ENCODE measurements at regions of chr12 and their contacts with region 1.

Region 1: GRCh38 chr12:57583008-57583831 is 7.8 kb upstream of the PIP4K2C start:
- DNase-seq: peak; percentile 90 to 96
- ATAC-seq: peak; percentile 91 to 98
- H3K4me3 ChIP-seq: no peak overlapping the region
- H3K27ac ChIP-seq: no peak overlapping the region
- H3K4me1 ChIP-seq: peaks cover 13% of the 10 kb centered on the region
- CTCF ChIP-seq: peak; percentile 96
- EP300 ChIP-seq: no peak
- POLR2A ChIP-seq: no peak
- RAD21 ChIP-seq: peak; percentile 86 to 93

Region 2: DNA sequence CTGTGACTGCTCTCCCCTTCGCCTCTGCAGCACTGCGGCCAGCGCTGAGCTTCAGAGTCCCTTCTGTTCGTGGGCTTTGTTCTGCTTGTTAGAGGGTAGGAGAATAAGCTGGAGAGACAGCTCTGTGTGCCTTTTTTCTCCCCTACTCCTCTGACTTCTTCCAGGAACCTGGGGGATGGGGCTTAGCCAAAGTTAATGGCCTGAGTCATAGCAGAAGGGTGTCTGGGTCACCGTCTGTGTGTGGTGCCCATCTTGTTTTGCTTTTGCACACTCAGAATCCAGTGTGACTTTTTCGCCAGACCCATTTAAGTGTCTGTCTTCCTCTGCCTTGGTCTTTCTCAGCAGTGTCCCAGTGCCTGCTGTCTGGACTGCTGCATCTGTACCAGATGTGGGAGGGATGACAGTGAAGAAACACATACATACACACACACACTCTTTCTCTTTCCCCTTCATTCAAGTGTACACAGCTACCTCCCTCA is 30.3 kb before region 1 on chr12:
- CTCF ChIA-PET with region 1: interaction called, 18 read pairs
- POLR2A ChIA-PET with region 1: no interaction called
- DNase-seq: no peak
- ATAC-seq: peak; percentile 30 to 33; a peak in 4 of 6 replicates
- H3K4me3 ChIP-seq: no peak overlapping the region
- H3K27ac ChIP-seq: peak overlapping the region in 1 of 2 experiments; percentile 7; a peak in 1 of 6 replicates
- H3K4me1 ChIP-seq: peaks cover 15% of the 10 kb centered on the region; the same call in 2 of the 3 replicates
- CTCF ChIP-seq: no peak
- EP300 ChIP-seq: no peak
- POLR2A ChIP-seq: no peak
- RAD21 ChIP-seq: no peak

Region 3: GRCh38 chr12:57621497-57622292 is 38.5 kb after region 1 on chr12:
- CTCF ChIA-PET with region 1: interaction called, 336 read pairs
- POLR2A ChIA-PET with region 1: no interaction called
- DNase-seq: peak; percentile 64 to 88
- ATAC-seq: peak; percentile 76 to 92
- H3K4me3 ChIP-seq: peak overlapping the region; percentile 53
- H3K27ac ChIP-seq: peak overlapping the region; percentile 54 to 76; a peak in 5 of 6 replicates
- H3K4me1 ChIP-seq: peaks cover 10% of the 10 kb centered on the region; the same call in 1 of the 3 replicates
- CTCF ChIP-seq: peak; percentile 96
- EP300 ChIP-seq: no peak
- POLR2A ChIP-seq: no peak
- RAD21 ChIP-seq: peak; percentile 71 to 84

Region 4: DNA sequence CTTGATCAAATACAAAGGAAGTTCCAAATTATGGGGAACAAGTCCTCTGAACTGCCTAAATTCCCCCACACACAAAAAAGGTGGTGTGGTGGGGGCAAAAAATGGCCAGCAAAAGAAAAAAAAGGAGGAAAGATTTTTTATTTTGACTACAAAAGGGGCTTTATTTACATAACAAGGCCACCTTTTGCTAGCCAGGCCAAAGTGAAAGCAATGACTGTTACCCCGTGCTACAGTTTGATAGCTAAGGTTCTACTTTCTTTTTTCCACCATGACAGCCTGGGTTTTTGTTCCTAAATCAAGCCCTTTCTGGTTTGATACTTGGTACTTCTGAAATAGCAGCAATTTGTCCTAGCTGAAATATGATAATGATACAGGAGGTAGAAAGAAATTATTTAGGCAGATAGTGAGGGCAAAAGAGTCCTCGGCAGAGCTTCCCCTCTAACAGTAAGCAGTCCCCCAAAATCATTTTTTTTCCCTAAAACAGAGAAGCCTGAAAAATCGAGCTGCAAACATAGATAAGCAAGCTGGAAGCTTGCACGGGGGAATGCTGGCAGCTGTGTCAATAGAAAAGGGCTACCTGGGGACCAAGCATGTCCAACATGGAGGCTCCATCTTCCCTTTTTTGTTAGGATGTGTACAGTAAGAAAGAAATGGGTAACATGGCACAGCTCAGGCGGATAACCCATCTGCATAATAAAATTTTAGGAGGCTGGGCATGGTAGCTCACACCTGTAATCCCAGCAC is 58.7 kb after region 1 on chr12:
- CTCF ChIA-PET with region 1: interaction called, 24 read pairs
- POLR2A ChIA-PET with region 1: no interaction called
- DNase-seq: no peak
- ATAC-seq: no peak
- H3K4me3 ChIP-seq: no peak overlapping the region
- H3K27ac ChIP-seq: no peak overlapping the region
- H3K4me1 ChIP-seq: no peaks in the 10 kb centered on the region
- CTCF ChIP-seq: no peak
- EP300 ChIP-seq: no peak
- POLR2A ChIP-seq: no peak
- RAD21 ChIP-seq: no peak

Region 5: GRCh38 chr12:57726151-57726883 is 143.1 kb after region 1 on chr12:
- CTCF ChIA-PET with region 1: interaction called, 91 read pairs
- POLR2A ChIA-PET with region 1: no interaction called
- DNase-seq: peak; percentile 89 to 97
- ATAC-seq: peak; percentile 87 to 95
- H3K4me3 ChIP-seq: peak overlapping the region; percentile 96
- H3K27ac ChIP-seq: peak overlapping the region; percentile 97 to 98
- H3K4me1 ChIP-seq: peaks cover 18% of the 10 kb centered on the region
- CTCF ChIP-seq: peak; percentile 82
- EP300 ChIP-seq: no peak
- POLR2A ChIP-seq: peak; percentile 77
- RAD21 ChIP-seq: peak; percentile 42 to 52; a peak in 3 of 5 replicates

Region 6: GRCh38 chr12:57815177-57816000 is 232.2 kb after region 1 on chr12:
- CTCF ChIA-PET with region 1: no interaction called
- POLR2A ChIA-PET with region 1: no interaction called
- DNase-seq: peak in 1 of 2 experiments; percentile 24
- ATAC-seq: peak; percentile 6 to 54; a peak in 5 of 6 replicates
- H3K4me3 ChIP-seq: no peak overlapping the region
- H3K27ac ChIP-seq: no peak overlapping the region
- H3K4me1 ChIP-seq: peaks cover 7% of the 10 kb centered on the region
- CTCF ChIP-seq: no peak
- EP300 ChIP-seq: no peak
- POLR2A ChIP-seq: no peak
- RAD21 ChIP-seq: 0 out of 5 replicates have a peak, but pooled peaks of 1 of the 2 experiments have one; percentile 15

Measured in A549 (cell line).